Dendritic cell treated with granulocyte-macrophage colony-stimulating factor and Interleukin-4, amounts not matched to agents 40 ng/mL and 50 ng/mL, for 4 days (primary cell): ENCODE measurements at regions of chr2 and their contacts with region 1.

Region 1: GRCh38 chr2:60998628-60999545 is 18.6 kb upstream of the PEX13 start:
- H3K4me3 Mint-ChIP-seq: no peak overlapping the region
- H3K27ac Mint-ChIP-seq: no peak overlapping the region
- H3K4me1 Mint-ChIP-seq: peaks cover 14% of the 10 kb centered on the region
- H3K27me3 Mint-ChIP-seq: no peaks in the 10 kb centered on the region

Region 2: DNA sequence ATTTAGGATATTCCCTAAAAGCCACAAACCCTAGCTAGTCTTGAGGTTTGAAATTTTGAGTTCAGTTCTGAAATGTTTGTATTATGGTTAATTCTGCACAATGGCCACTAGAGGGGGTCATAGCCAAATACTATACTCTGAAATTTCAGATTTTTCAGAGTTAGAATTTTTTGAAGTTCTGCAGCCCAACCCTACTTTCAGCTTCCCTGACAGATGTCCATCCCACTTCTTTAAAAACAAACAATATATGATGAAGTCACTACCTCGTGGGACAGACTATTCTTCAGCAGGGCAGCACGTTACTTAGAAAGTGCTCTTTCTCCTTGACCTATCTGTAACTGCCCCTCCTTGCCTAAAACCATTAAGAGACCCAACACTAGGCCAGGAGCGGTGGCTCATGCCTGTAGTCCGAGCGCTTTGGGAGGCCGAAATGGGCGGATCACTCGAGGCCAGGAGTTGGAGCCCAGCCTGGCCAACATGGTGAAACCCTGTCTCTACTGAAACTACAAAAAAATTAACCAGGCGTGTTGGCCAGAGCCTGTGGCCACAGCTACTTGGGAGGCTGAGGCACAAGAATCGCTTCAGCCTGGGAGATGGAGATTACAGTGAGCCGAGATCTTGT is 291.0 kb before region 1 on chr2:
- intact Hi-C with region 1: loop called (anchors 1 kb)
- H3K4me3 Mint-ChIP-seq: no peak overlapping the region
- H3K27ac Mint-ChIP-seq: peak overlapping the region; percentile 80
- H3K4me1 Mint-ChIP-seq: peaks cover 22% of the 10 kb centered on the region
- H3K27me3 Mint-ChIP-seq: no peaks in the 10 kb centered on the region

Region 3: DNA sequence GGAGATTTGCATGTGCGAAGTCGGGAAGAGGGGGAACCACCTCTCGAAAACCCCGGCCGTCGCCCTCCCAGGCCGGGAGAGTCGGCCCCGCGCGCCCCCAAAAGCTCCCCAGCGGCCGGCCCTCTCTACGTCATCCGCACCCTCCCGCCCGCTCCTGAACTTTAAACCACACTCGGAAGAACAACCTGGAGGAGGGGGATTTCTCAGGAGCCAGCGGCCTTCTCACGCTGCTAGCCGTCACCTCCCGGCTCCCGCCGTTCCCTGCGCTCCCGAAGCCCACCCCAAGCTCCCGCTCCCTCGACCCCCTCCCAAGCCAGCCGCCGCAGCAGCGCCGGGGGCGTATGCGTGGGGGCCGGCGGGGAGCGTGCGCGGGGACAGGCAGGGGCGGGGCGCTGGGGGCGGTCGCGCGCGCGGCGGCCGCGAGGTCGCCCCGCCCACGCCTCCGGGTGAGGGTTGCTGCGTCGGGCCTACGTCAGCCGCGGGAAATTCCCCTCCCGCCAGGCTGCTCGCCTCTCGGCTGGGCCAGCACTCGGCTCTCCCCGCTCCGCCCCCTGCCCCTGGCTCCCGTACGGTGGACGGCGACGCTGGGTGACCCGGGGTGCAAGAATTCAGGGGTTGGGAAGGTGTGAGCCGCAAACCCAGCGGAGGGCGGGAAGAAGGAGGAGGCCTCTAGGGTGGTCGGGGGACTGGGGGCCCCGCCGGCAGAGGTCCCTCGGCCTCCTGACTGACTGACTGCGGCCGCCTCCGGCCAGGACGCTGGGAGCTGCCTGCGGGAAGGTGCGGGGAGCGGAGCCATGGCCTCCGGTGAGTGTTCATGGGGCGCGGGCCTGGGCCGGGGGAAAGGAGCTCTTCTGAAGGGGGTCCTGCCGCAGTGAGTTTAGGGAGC is 117.6 kb before region 1 on chr2 and contains the start of gene REL:
- intact Hi-C with region 1: loop called (anchors 5 kb)
- H3K4me3 Mint-ChIP-seq: peak within 1 kb of the TSS; percentile 99
- H3K27ac Mint-ChIP-seq: peak within 1 kb of the TSS; percentile 99
- H3K4me1 Mint-ChIP-seq: peaks cover 22% of the 10 kb centered on the region
- H3K27me3 Mint-ChIP-seq: no peaks in the 10 kb centered on the region

Region 4: GRCh38 chr2:60926737-60927552 is 71.9 kb before region 1 on chr2:
- intact Hi-C with region 1: loop called (anchors 5 kb)
- H3K4me3 Mint-ChIP-seq: peak overlapping the region; percentile 45
- H3K27ac Mint-ChIP-seq: peak overlapping the region; percentile 68
- H3K4me1 Mint-ChIP-seq: peaks cover 34% of the 10 kb centered on the region
- H3K27me3 Mint-ChIP-seq: no peaks in the 10 kb centered on the region

Region 5: GRCh38 chr2:61090386-61090921 is 91.6 kb after region 1 on chr2:
- intact Hi-C with region 1: no loop called
- H3K4me3 Mint-ChIP-seq: no peak overlapping the region
- H3K27ac Mint-ChIP-seq: no peak overlapping the region
- H3K4me1 Mint-ChIP-seq: no peaks in the 10 kb centered on the region
- H3K27me3 Mint-ChIP-seq: no peaks in the 10 kb centered on the region